OCI-LY7 (cell line): ENCODE measurements at regions of chr6 and their contacts with region 1.

Region 1: GRCh38 chr6:63649269-63649668 is 13.7 kb downstream of the PHF3 start:
- DNase-seq: no peak
- H3K4me3 ChIP-seq: no peak overlapping the region
- H3K27ac ChIP-seq: no peak overlapping the region
- H3K4me1 ChIP-seq: no peaks in the 10 kb centered on the region
- CTCF ChIP-seq: no peak

Region 2: GRCh38 chr6:63635588-63636517 is 13.4 kb before region 1 on chr6 and contains the start of gene PHF3:
- CTCF ChIA-PET with region 1: no interaction called
- POLR2A ChIA-PET with region 1: interaction called, 11 read pairs
- intact Hi-C with region 1: no loop called
- DNase-seq: peak; percentile 96
- H3K4me3 ChIP-seq: peak within 1 kb of the TSS; percentile 78
- H3K27ac ChIP-seq: peak within 1 kb of the TSS; percentile 77
- H3K4me1 ChIP-seq: peaks cover 48% of the 10 kb centered on the region
- CTCF ChIP-seq: peak; percentile 42
- total RNA-seq, gene PHF3: 54.0 and 54.8 TPM in 2 replicates